H1 (cell line): ENCODE measurements at regions of chr20 and their contacts with region 1.

Region 1: DNA sequence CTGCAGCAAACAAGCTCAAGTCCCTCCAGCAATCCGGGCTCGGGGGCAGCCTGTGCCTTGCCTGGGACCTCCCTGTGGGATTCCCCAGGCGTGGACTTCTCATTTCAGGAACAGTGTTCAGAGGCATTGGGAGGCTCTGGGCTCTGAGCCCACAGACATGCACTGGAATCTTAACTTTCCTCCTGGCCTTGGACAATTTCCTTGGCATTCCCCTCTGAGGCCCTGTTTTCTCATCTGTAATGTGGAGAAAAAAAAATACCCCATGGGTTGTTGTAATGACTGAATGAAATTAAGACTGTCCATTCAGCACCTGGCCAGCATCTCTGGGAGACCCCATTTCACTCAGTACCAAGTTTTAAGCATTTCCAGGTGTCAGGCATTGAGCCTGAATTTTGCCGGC is 17.6 kb downstream of the BPIFB4 start:
- DNase-seq: no peak
- H3K4me3 ChIP-seq: no peak overlapping the region
- H3K27ac ChIP-seq: no peak overlapping the region
- H3K4me1 ChIP-seq: no peaks in the 10 kb centered on the region
- H3K27me3 ChIP-seq: no peaks in the 10 kb centered on the region
- CTCF ChIP-seq: no peak
- EP300 ChIP-seq: no peak
- POLR2A ChIP-seq: no peak
- RAD21 ChIP-seq: no peak

Region 2: DNA sequence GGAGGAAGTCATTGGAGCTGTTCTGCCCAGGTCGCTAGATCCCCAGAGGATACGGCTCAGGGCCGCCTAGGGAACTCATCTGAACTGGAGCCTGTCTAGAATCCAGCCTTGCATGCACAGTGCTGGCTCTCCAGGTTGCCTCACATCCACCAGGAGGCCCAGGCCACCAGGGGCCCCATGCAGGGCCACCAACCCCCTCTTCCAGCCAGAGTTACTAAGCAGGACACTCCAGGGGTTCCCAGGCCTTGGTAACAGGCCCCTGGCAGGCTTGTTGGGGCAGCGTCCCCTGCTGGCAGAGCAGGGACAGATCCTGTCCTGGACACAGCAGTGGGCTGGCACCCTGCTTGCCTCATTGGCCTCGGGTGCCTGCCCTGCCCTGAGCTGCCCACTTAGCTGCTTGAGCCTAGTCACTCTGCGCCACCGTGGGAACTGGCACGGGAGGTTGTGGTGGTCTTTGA is 202.9 kb before region 1 on chr20:
- CTCF ChIA-PET with region 1: interaction called, 15 read pairs
- POLR2A ChIA-PET with region 1: no interaction called
- DNase-seq: peak; percentile 41 to 85
- H3K4me3 ChIP-seq: no peak overlapping the region
- H3K27ac ChIP-seq: no peak overlapping the region
- H3K4me1 ChIP-seq: peaks cover 0 to 10% (median 4%) of the 10 kb centered on the region in 4 experiments; a peak in 5 of 7 replicates
- H3K27me3 ChIP-seq: no peaks in the 10 kb centered on the region
- CTCF ChIP-seq: peak; percentile 88 to 96 (median 94)
- EP300 ChIP-seq: no peak
- POLR2A ChIP-seq: no peak
- RAD21 ChIP-seq: peak; percentile 74 to 86

Region 3: GRCh38 chr20:32908334-32909292 is 188.4 kb before region 1 on chr20:
- CTCF ChIA-PET with region 1: interaction called, 10 read pairs
- POLR2A ChIA-PET with region 1: interaction called, 3 read pairs
- DNase-seq: no peak
- H3K4me3 ChIP-seq: no peak overlapping the region
- H3K27ac ChIP-seq: no peak overlapping the region
- H3K4me1 ChIP-seq: no peaks in the 10 kb centered on the region
- H3K27me3 ChIP-seq: no peaks in the 10 kb centered on the region
- CTCF ChIP-seq: no peak
- EP300 ChIP-seq: no peak
- POLR2A ChIP-seq: no peak
- RAD21 ChIP-seq: no peak

Region 4: GRCh38 chr20:32999603-33000250 is 97.3 kb before region 1 on chr20:
- CTCF ChIA-PET with region 1: interaction called, 18 read pairs
- POLR2A ChIA-PET with region 1: no interaction called
- DNase-seq: no peak
- H3K4me3 ChIP-seq: no peak overlapping the region
- H3K27ac ChIP-seq: no peak overlapping the region
- H3K4me1 ChIP-seq: no peaks in the 10 kb centered on the region; a peak in 1 of 7 replicates
- H3K27me3 ChIP-seq: no peaks in the 10 kb centered on the region
- CTCF ChIP-seq: no peak
- EP300 ChIP-seq: no peak
- POLR2A ChIP-seq: no peak
- RAD21 ChIP-seq: no peak

Region 5: GRCh38 chr20:33059741-33060390 is 37.1 kb before region 1 on chr20:
- CTCF ChIA-PET with region 1: interaction called, 13 read pairs
- POLR2A ChIA-PET with region 1: no interaction called
- DNase-seq: peak in 1 of 2 experiments; percentile 55
- H3K4me3 ChIP-seq: no peak overlapping the region
- H3K27ac ChIP-seq: no peak overlapping the region
- H3K4me1 ChIP-seq: no peaks in the 10 kb centered on the region
- H3K27me3 ChIP-seq: no peaks in the 10 kb centered on the region
- CTCF ChIP-seq: no peak
- EP300 ChIP-seq: no peak
- POLR2A ChIP-seq: no peak
- RAD21 ChIP-seq: no peak

Region 6: DNA sequence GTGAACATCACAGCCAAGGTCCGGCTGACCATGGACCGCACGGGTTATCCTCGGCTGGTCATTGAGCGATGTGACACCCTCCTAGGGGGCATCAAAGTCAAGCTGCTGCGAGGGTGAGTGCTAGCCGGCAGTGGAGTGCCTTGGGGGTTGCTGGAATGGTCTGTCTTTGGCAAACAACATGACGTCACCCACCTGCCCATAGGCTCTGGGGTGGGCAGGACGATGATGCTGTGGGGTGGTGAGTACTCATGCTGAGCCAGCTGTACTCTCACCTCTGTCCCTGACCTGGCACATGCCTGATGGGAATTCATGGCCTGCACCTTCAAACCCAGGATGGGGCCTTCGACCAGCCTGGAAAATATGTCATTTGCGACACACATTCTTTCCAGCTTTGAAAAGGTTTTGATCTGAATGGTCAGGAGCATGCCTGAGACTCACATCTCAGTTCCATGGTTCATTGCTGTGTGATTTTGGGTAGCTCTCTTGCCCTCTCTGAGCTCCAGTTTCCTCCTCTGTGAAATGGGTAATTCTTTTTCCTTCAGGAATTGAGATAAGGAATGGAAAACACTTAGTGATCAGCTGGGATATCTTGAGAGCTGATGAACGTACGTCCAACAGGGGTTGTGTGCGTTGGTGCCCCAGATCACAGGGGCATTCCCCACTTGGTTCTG is 10.8 kb before region 1 on chr20:
- CTCF ChIA-PET with region 1: interaction called, 13 read pairs
- POLR2A ChIA-PET with region 1: no interaction called
- DNase-seq: no peak
- H3K4me3 ChIP-seq: no peak overlapping the region
- H3K27ac ChIP-seq: no peak overlapping the region
- H3K4me1 ChIP-seq: no peaks in the 10 kb centered on the region
- H3K27me3 ChIP-seq: no peaks in the 10 kb centered on the region
- CTCF ChIP-seq: no peak
- EP300 ChIP-seq: no peak
- POLR2A ChIP-seq: no peak
- RAD21 ChIP-seq: no peak

Region 7: GRCh38 chr20:33178726-33179125 is 81.7 kb after region 1 on chr20:
- CTCF ChIA-PET with region 1: interaction called, 14 read pairs
- POLR2A ChIA-PET with region 1: no interaction called
- DNase-seq: peak in 1 of 2 experiments; percentile 19
- H3K4me3 ChIP-seq: no peak overlapping the region
- H3K27ac ChIP-seq: no peak overlapping the region
- H3K4me1 ChIP-seq: peaks cover 0 to 3% (median 2%) of the 10 kb centered on the region in 4 experiments; a peak in 3 of 7 replicates
- H3K27me3 ChIP-seq: no peaks in the 10 kb centered on the region
- CTCF ChIP-seq: no peak
- EP300 ChIP-seq: no peak
- POLR2A ChIP-seq: no peak
- RAD21 ChIP-seq: no peak

Region 8: DNA sequence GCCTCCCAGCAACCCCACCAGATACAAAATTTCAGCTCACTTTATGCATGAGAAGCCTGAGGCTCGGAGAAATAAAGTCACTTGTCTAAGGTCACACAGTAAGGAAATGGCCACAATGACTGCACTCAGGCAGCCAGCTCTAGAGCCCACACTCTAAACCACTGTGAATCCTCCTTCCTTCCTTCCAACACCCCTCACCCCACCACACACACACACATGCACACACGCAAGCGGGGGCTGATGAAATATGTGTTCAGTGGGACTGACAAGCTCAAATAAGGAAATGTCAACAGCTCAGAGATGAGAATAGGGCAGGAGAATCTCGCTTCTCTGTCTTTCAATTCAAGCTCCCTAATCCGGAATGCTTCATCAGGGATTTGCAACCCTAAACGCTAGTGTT is 132.8 kb after region 1 on chr20:
- CTCF ChIA-PET with region 1: no interaction called
- POLR2A ChIA-PET with region 1: no interaction called
- DNase-seq: no peak
- H3K4me3 ChIP-seq: no peak overlapping the region
- H3K27ac ChIP-seq: no peak overlapping the region
- H3K4me1 ChIP-seq: 0 out of 7 replicates have a peak, but pooled peaks cover 0 to 3% (median 0%) of the 10 kb centered on the region in 4 experiments
- H3K27me3 ChIP-seq: no peaks in the 10 kb centered on the region
- CTCF ChIP-seq: no peak
- EP300 ChIP-seq: no peak
- POLR2A ChIP-seq: no peak
- RAD21 ChIP-seq: no peak